HCT116 (cell line): ENCODE measurements at regions of chr11 and their contacts with region 1.

Region 1: GRCh38 chr11:32176223-32176934 is 85.5 kb downstream of the RCN1 start:
- DNase-seq: peak; percentile 90
- ATAC-seq: peak; percentile 83
- H3K4me3 ChIP-seq: no peak overlapping the region
- H3K27ac ChIP-seq: no peak overlapping the region
- H3K4me1 ChIP-seq: no peaks in the 10 kb centered on the region
- H3K27me3 ChIP-seq: no peaks in the 10 kb centered on the region
- CTCF ChIP-seq: peak; percentile 77 to 85 (median 81)
- POLR2A ChIP-seq: no peak
- RAD21 ChIP-seq: peak; percentile 93

Region 2: DNA sequence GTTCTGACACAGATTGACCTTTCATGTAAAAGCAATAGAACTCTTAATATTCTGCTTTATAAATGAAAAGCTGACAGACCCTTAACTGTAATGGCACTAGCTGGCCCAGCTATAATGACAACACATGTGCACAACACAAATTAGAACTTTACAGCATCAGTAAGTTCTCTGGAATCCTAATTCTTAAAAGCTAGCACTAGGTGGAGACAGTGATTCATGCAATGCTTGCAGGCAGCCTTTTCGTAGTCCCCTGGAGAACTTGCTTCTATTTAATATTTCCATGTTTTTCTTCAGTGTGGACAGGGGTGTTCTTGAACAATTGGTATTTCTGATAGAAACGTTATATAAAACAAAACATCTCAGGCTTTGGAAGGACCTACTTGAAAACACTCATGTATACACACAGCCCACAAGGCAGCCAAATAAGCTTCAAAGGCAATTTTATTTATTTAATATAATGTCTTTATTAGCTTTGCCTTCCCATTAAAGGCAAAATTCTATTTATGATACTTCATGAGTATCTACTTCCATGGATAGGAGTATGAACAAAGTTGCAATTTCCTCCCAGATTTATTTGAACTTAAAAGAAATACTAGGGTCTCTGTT is 1215.9 kb before region 1 on chr11:
- CTCF ChIA-PET with region 1: no interaction called
- POLR2A ChIA-PET with region 1: no interaction called
- RAD21 ChIA-PET with region 1: no interaction called
- intact Hi-C with region 1: loop called (anchors 2 kb)
- DNase-seq: peak; percentile 35
- ATAC-seq: peak; percentile 75
- H3K4me3 ChIP-seq: no peak overlapping the region
- H3K27ac ChIP-seq: no peak overlapping the region
- H3K4me1 ChIP-seq: no peaks in the 10 kb centered on the region
- H3K27me3 ChIP-seq: peaks cover 9% of the 10 kb centered on the region
- CTCF ChIP-seq: peak; percentile 54 to 66 (median 60)
- POLR2A ChIP-seq: no peak
- RAD21 ChIP-seq: peak; percentile 68

Region 3: DNA sequence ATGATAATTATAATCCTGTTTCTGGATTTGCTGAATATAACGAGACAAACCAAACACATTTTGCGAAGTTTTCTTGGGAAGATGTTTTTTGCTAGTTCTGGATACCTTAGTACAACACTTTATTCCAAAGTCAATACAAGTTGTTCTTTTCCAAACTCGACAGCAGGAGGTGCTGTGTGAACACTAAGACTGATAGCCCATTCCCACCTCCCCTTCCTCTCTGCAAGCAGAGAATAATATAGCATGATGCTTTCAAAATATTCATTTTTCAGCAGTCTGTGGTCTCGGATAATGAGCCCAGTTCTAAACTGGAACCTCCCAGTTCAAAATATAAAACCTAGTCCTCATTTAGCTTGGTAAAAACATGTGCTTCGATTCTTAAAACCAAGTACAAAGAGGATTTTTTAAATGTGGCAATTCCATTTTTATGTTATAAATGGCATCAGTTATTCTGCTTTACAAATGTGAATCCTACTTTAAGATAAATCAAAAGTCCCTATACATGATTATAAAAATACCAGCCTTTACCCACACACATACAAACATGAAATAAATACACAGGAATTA is 936.0 kb before region 1 on chr11:
- CTCF ChIA-PET with region 1: interaction called, 21 read pairs
- POLR2A ChIA-PET with region 1: no interaction called
- RAD21 ChIA-PET with region 1: no interaction called
- intact Hi-C with region 1: loop called (anchors 1 kb)
- DNase-seq: peak; percentile 59
- ATAC-seq: peak; percentile 80
- H3K4me3 ChIP-seq: no peak overlapping the region
- H3K27ac ChIP-seq: no peak overlapping the region
- H3K4me1 ChIP-seq: no peaks in the 10 kb centered on the region
- H3K27me3 ChIP-seq: no peaks in the 10 kb centered on the region
- CTCF ChIP-seq: peak; percentile 48 to 72 (median 62); a peak in 5 of 6 replicates
- POLR2A ChIP-seq: no peak
- RAD21 ChIP-seq: peak; percentile 72

Region 4: DNA sequence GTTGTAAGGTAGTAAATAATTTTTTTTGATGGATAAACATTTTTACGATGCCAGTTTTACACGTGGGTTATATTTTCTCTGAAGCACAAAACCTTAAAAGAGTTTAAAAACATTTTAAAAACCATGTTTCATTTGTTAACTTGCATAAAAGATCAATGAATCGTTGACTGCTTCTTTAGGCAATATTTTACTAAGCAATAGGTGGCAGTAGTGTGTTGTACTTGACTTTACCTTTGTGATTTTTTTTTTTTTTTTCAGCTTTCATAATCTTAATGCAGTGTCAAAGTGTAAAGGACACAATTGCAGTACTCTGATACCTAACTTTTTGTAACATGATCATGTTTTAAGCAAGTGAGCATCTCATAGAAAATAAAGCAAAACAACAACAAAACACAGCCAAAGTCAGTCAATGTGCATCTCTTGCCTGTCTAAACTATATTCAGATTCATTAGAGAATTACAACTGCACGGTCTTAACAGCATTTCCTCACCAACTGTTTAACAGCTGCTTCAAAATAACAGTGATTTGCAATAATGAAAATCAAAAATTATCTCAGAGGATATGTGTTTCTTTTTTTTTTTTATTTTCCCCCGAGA is 779.0 kb before region 1 on chr11:
- CTCF ChIA-PET with region 1: no interaction called
- POLR2A ChIA-PET with region 1: no interaction called
- RAD21 ChIA-PET with region 1: no interaction called
- intact Hi-C with region 1: loop called (anchors 5 kb)
- DNase-seq: no peak
- ATAC-seq: no peak
- H3K4me3 ChIP-seq: no peak overlapping the region
- H3K27ac ChIP-seq: no peak overlapping the region
- H3K4me1 ChIP-seq: no peaks in the 10 kb centered on the region
- H3K27me3 ChIP-seq: no peaks in the 10 kb centered on the region
- CTCF ChIP-seq: peak; percentile 37 to 72 (median 51); a peak in 4 of 6 replicates
- POLR2A ChIP-seq: no peak
- RAD21 ChIP-seq: peak; percentile 59

Region 5: DNA sequence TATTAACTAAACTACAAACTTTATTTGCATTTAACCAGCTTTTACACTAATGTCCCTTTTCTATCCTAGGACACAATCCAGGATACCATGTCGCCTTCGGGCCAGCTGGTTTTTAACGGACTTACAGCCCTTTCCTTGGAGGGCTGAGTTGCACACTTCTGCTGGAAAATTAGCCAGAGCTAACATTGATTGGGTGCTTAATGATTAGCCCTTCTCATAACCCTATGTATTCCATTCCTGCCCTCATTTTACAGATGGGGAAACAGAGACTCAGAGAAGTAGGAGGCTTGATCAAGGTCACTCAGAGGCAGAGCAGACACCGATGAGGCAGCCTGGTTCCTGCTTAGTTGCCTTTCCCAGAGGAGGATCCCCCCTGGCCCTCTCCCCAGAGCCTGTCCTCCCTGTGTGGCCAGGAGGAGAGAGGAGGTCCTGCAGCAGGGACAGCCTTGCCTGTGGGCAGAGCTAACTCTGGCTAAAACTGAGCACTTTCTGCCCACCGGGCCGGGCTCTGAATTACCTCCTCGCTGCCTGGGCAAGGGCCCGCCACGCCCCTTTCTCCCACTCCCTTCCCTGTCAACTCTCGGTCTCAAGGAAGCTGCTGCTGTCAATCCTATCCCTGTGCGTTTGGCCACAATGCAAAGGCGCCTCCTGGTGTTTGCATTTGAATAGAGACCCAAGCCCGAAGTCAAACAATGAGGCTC is 305.6 kb before region 1 on chr11:
- CTCF ChIA-PET with region 1: interaction called, 4 read pairs
- POLR2A ChIA-PET with region 1: no interaction called
- RAD21 ChIA-PET with region 1: no interaction called
- intact Hi-C with region 1: loop called (anchors 5 kb)
- DNase-seq: peak; percentile 48
- ATAC-seq: peak; percentile 87
- H3K4me3 ChIP-seq: no peak overlapping the region
- H3K27ac ChIP-seq: no peak overlapping the region
- H3K4me1 ChIP-seq: peaks cover 0 to 9% of the 10 kb centered on the region in 2 experiments; a peak in 2 of 4 replicates
- H3K27me3 ChIP-seq: no peaks in the 10 kb centered on the region
- CTCF ChIP-seq: peak; percentile 80 to 87 (median 81)
- POLR2A ChIP-seq: no peak
- RAD21 ChIP-seq: peak; percentile 93

Region 6: DNA sequence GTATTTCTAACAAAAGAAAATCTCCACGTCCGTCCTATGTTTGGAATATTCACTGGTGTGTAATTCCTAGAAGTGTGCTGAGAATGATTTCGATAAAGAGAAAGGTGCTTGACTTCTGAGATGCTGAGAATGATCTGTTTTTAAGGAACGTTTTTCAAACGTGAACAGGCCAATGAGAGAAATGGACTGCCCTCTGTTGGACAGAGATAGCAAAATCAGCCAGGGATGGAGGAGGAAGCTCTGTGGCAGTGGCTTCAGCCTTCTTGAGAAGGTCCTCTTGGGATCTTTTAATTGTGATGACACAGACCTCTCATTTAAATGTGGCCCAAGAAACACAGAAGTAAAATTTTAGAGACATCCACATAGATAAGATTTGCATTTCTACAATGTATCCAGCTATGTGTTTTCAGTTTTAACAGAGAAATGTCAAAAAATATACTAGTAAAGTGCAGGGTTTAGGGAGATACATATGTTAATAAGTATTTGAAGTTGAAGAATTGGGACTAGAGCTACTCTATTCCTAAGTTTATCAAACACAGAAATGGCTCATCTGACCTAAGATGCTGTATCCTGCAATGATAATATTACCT is 169.5 kb before region 1 on chr11:
- CTCF ChIA-PET with region 1: interaction called, 10 read pairs
- POLR2A ChIA-PET with region 1: no interaction called
- RAD21 ChIA-PET with region 1: no interaction called
- intact Hi-C with region 1: loop called (anchors 2 kb)
- DNase-seq: peak; percentile 35
- ATAC-seq: peak; percentile 93
- H3K4me3 ChIP-seq: no peak overlapping the region
- H3K27ac ChIP-seq: no peak overlapping the region
- H3K4me1 ChIP-seq: no peaks in the 10 kb centered on the region
- H3K27me3 ChIP-seq: peaks cover 34% of the 10 kb centered on the region
- CTCF ChIP-seq: peak; percentile 46 to 77 (median 73); a peak in 5 of 6 replicates
- POLR2A ChIP-seq: no peak
- RAD21 ChIP-seq: peak; percentile 56

Region 7: GRCh38 chr11:32105871-32106560 is 70.4 kb before region 1 on chr11:
- CTCF ChIA-PET with region 1: no interaction called
- POLR2A ChIA-PET with region 1: no interaction called
- RAD21 ChIA-PET with region 1: no interaction called
- intact Hi-C with region 1: no loop called
- DNase-seq: no peak
- ATAC-seq: no peak
- H3K4me3 ChIP-seq: no peak overlapping the region
- H3K27ac ChIP-seq: no peak overlapping the region
- H3K4me1 ChIP-seq: no peaks in the 10 kb centered on the region
- H3K27me3 ChIP-seq: no peaks in the 10 kb centered on the region
- CTCF ChIP-seq: no peak
- POLR2A ChIP-seq: no peak
- RAD21 ChIP-seq: no peak

Region 8: GRCh38 chr11:32297611-32298011 is 121.2 kb after region 1 on chr11:
- CTCF ChIA-PET with region 1: interaction called, 18 read pairs
- POLR2A ChIA-PET with region 1: no interaction called
- RAD21 ChIA-PET with region 1: no interaction called
- intact Hi-C with region 1: loop called (anchors 5 kb)
- DNase-seq: peak; percentile 31
- ATAC-seq: peak; percentile 84
- H3K4me3 ChIP-seq: no peak overlapping the region
- H3K27ac ChIP-seq: no peak overlapping the region
- H3K4me1 ChIP-seq: no peaks in the 10 kb centered on the region
- H3K27me3 ChIP-seq: no peaks in the 10 kb centered on the region
- CTCF ChIP-seq: peak; percentile 26 to 58 (median 53); a peak in 4 of 6 replicates
- POLR2A ChIP-seq: no peak
- RAD21 ChIP-seq: peak; percentile 69